B cell (primary cell): ENCODE measurements at regions of chr16 and their contacts with region 1.

Region 1: GRCh38 chr16:57045694-57046381 is 46.5 kb upstream of the CPNE2 start:
- DNase-seq: peak; percentile 84
- ATAC-seq: peak; percentile 48
- H3K4me3 ChIP-seq: peak overlapping the region in 2 of 5 experiments; percentile 25 to 38
- H3K4me3 Mint-ChIP-seq: peak overlapping the region; percentile 78
- H3K27ac ChIP-seq: peak overlapping the region; percentile 65 to 72
- H3K27ac Mint-ChIP-seq: peak overlapping the region; percentile 98
- H3K4me1 ChIP-seq: peaks cover 51 to 69% of the 10 kb centered on the region in 2 donors
- H3K4me1 Mint-ChIP-seq: peaks cover 68% of the 10 kb centered on the region
- H3K27me3 ChIP-seq: no peaks in the 10 kb centered on the region
- H3K27me3 Mint-ChIP-seq: no peaks in the 10 kb centered on the region
- CTCF ChIP-seq: peak; percentile 67

Region 2: DNA sequence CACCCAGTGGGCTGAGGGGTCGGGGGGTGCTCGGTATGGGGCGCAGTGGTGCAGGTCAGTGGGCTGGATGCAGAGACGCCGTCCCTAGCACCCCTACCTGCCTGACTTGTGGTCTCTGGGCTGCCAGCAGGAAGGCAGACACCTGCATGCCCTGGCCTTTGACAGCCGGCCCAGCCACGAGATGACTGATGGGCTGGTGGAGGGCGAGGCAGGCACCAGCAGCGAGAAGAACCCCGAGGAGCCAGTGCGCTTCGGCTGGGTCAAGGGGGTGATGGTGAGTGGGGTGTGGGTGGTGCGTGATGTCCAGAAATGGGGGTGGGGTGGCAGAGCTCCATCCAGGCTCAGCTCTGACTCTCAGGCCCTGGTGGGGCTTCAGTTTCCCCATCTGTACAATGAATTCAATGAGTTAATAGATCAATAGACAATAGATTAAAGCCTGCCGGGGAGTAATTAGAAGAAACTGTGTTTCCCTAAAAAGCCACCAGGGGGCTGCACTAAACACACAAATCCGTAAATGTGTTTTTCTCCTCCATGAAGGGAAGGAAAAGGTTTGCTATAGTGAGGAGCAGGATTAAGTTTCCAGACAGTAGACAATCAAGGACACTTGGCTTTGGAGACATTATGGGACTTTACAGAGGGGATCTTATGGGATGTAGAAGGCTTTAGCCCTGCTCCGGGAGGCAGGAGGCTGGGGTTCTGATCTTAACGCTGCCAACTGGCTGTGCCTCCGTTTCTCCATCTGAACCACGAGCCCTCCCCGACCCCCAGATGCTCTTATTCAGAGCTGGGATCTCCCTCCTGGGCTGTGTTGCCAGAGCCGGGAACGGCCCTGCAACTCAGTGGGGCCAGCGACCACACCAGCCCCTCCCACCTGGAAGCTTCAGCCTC is 178.7 kb before region 1 on chr16:
- CTCF ChIA-PET with region 1: interaction called, 15 read pairs
- POLR2A ChIA-PET with region 1: interaction called, 3 read pairs
- intact Hi-C with region 1: loop called (anchors 1 kb)
- DNase-seq: peak; percentile 81
- ATAC-seq: no peak
- H3K4me3 ChIP-seq: no peak overlapping the region
- H3K4me3 Mint-ChIP-seq: peak overlapping the region; percentile 55
- H3K27ac ChIP-seq: no peak overlapping the region
- H3K27ac Mint-ChIP-seq: peak overlapping the region; percentile 69
- H3K4me1 ChIP-seq: peaks cover 21 to 59% of the 10 kb centered on the region in 2 donors
- H3K4me1 Mint-ChIP-seq: peaks cover 37% of the 10 kb centered on the region
- H3K27me3 ChIP-seq: no peaks in the 10 kb centered on the region
- H3K27me3 Mint-ChIP-seq: no peaks in the 10 kb centered on the region
- CTCF ChIP-seq: peak; percentile 89

Region 3: GRCh38 chr16:56950881-56951771 is 94.7 kb before region 1 on chr16:
- CTCF ChIA-PET with region 1: interaction called, 12 read pairs
- POLR2A ChIA-PET with region 1: interaction called, 11 read pairs
- intact Hi-C with region 1: loop called (anchors 1 kb)
- DNase-seq: peak; percentile 92
- ATAC-seq: peak; percentile 84
- H3K4me3 ChIP-seq: peak overlapping the region in 1 of 5 experiments; percentile 1
- H3K4me3 Mint-ChIP-seq: peak overlapping the region; percentile 68
- H3K27ac ChIP-seq: peak overlapping the region; percentile 42 to 58
- H3K27ac Mint-ChIP-seq: peak overlapping the region; percentile 83
- H3K4me1 ChIP-seq: peaks cover 24 to 26% of the 10 kb centered on the region in 2 donors
- H3K4me1 Mint-ChIP-seq: peaks cover 41% of the 10 kb centered on the region
- H3K27me3 ChIP-seq: no peaks in the 10 kb centered on the region
- H3K27me3 Mint-ChIP-seq: no peaks in the 10 kb centered on the region
- CTCF ChIP-seq: peak; percentile 49

Region 4: DNA sequence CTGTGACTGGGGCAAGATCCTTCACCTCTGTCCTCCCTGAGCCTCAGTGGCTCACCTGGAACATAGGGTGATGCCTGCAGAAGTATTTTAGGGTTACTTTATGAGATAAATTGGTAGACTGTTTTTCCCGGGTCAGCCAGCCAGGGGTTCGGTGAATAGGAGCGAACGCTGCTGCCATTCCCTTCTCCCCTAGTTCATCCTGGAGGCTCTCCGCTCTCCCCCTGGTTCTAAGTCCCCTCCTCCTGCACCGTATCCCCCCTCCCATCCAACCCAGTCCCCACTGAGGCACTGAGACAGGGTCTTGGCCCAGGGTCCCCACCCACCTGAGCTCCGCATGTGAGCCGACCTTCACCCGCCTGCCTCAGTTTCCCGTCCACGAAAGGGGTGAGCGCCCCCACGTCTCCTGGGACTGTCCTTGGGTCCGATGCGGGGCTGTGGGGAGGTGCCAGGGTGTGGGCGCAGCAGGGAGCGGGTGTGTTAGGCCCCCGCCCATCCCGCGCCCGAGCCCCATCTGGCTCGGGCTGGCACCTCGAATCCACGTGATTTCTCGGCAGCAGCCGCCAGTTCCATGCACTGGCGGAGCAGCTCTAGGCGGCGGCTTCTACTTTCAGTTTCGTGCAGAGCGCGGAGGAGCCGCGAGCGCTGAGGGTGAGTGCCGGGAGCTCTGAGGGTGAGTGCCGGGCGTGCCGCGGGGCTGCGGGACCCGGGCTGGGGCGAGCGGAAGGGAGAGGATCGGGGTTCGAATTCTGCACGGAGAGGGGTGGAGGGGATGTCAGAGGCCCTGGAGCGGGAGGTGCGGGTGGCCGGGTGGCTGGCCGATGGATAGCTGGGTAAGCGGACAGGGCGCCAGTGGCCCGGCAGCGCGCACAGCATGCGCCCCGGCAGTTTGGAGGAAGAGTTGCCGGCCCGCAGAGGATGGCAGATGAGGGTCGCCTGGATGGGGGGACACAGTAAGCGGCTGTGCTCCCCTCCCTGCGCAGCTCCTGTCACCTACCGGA is 56.6 kb before region 1 on chr16 and contains the start of gene NLRC5:
- CTCF ChIA-PET with region 1: interaction called, 14 read pairs
- POLR2A ChIA-PET with region 1: interaction called, 20 read pairs
- intact Hi-C with region 1: loop called (anchors 1 kb)
- DNase-seq: peak; percentile 93
- ATAC-seq: peak; percentile 89
- H3K4me3 ChIP-seq: peak within 1 kb of the TSS; percentile 69 to 97 (median 89)
- H3K4me3 Mint-ChIP-seq: peak within 1 kb of the TSS; percentile 100
- H3K27ac ChIP-seq: peak within 1 kb of the TSS; percentile 83 to 86
- H3K27ac Mint-ChIP-seq: peak within 1 kb of the TSS; percentile 99
- H3K4me1 ChIP-seq: peaks cover 75 to 81% of the 10 kb centered on the region in 2 donors
- H3K4me1 Mint-ChIP-seq: peaks cover 86% of the 10 kb centered on the region
- H3K27me3 ChIP-seq: no peaks in the 10 kb centered on the region
- H3K27me3 Mint-ChIP-seq: no peaks in the 10 kb centered on the region
- CTCF ChIP-seq: no peak
- total RNA-seq, gene NLRC5: 510 and 531 TPM in 2 replicates

Region 5: GRCh38 chr16:57013229-57013628 is 32.6 kb before region 1 on chr16:
- CTCF ChIA-PET with region 1: interaction called, 6 read pairs
- POLR2A ChIA-PET with region 1: interaction called, 6 read pairs
- intact Hi-C with region 1: loop called (anchors 1 kb)
- DNase-seq: no peak
- ATAC-seq: no peak
- H3K4me3 ChIP-seq: no peak overlapping the region
- H3K4me3 Mint-ChIP-seq: peak overlapping the region; percentile 66
- H3K27ac ChIP-seq: peak overlapping the region in 1 of 2 donors; percentile 75
- H3K27ac Mint-ChIP-seq: peak overlapping the region; percentile 41
- H3K4me1 ChIP-seq: peaks cover 36 to 45% of the 10 kb centered on the region in 2 donors
- H3K4me1 Mint-ChIP-seq: peaks cover 47% of the 10 kb centered on the region
- H3K27me3 ChIP-seq: no peaks in the 10 kb centered on the region
- H3K27me3 Mint-ChIP-seq: no peaks in the 10 kb centered on the region
- CTCF ChIP-seq: no peak